HepG2 (cell line): ENCODE measurements at regions of chr11 and their contacts with region 1.

Region 1: DNA sequence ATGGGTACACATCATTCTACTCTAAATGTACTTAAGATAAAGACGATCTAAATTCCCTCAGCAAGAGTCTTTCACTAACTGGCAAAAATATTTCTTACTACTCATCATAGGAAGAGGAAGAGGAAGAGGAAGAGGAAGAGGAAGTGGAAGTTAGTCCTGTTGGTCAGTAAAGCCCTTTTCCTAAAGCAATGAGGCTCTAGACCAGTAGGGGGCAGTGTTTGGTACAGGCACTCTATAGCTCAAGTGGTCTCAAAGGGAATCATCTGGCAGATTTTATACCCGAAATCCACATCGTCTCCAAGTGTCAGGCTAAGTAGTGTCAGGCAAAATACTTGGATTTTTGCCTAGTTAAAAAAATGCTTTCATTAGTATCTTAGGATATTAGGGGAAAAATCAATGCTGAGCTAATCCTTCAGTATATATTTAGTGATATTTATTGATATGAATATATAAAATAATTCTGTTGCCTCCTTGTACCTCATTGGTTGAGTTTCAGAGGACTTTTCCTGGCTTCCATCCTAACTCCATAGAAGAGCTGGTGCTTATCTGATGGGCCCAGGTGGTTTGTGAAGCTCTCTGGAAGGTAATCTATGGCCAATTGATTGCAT is 7.7 kb downstream of the BLID start:
- DNase-seq: peak; percentile 29
- ATAC-seq: peak; percentile 37; the same call in 1 of the 3 replicates
- H3K4me3 ChIP-seq: no peak overlapping the region
- H3K27ac ChIP-seq: no peak overlapping the region
- H3K4me1 ChIP-seq: no peaks in the 10 kb centered on the region
- H3K27me3 ChIP-seq: no peaks in the 10 kb centered on the region
- CTCF ChIP-seq: peak; percentile 47
- EP300 ChIP-seq: no peak
- POLR2A ChIP-seq: no peak
- RAD21 ChIP-seq: no peak

Region 2: DNA sequence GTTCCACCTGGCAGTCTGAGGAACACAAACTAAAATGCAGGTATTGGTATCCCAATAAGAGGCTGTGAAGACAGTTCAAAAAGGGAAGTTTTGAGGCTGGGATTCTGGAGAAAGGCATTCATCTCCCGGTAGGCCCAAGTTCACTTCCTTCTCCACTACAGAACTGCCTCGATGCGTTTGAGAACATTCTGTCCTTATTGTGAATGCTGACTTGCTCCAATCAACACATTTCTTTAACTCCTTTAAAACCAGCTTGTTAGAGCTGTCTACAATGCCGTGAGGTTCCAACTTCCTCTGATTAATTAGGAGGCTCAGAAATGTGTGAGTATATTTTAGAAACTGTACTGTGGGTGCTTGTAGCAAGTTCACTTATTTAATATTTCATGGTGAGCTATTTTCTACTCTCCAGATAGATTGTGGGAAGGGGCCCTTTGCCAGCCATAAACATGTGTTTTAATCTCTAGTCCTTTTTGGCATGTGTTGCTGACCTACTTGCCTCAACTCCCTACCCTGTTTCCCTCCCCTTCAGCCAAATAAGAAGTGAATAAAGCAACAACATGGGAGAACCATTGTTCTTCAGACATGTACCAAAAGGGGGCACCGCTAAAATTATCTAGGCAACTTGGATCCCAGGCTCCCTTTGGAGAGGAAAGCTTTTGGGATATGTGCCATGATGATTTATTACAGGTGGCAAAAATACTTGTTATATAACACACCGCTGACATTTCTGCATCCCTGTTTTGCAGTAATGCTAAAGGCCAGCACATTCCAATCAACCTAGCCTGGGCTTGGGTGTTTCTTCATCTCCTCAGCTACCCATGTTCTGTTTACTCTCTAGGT is 237.9 kb before region 1 on chr11:
- CTCF ChIA-PET with region 1: no interaction called
- POLR2A ChIA-PET with region 1: no interaction called
- in situ Hi-C with region 1: no loop called
- intact Hi-C with region 1: loop called (anchors 10 kb)
- DNase-seq: peak; percentile 4
- ATAC-seq: no peak
- H3K4me3 ChIP-seq: no peak overlapping the region
- H3K27ac ChIP-seq: no peak overlapping the region
- H3K4me1 ChIP-seq: peaks cover 14% of the 10 kb centered on the region
- H3K27me3 ChIP-seq: no peaks in the 10 kb centered on the region
- CTCF ChIP-seq: peak; percentile 37
- EP300 ChIP-seq: no peak
- POLR2A ChIP-seq: no peak
- RAD21 ChIP-seq: no peak

Region 3: DNA sequence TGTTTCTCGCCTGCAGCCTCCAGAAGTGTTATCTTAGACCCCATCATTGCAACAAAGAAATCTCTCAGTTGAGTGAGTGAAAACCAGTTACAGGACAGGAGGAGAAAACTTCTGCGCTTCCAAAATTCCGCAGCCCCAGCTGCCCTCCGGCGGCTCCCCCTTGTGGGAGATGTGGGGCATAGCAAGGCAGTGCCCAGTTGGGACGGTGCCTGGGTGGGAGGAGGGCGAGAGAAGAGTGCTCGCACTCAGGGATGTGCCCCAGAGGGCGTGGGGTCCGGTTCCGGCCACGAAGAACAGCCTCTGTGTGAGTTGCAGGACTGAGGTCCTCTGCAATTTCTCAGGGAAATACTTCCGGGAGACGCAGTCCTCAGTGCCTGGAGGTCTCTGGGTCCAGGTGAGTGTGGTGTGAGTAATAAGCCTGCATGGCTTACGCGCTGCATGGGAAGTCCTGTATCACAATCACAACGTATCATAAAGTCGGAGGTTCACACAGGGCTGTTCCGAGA is 94.7 kb after region 1 on chr11:
- CTCF ChIA-PET with region 1: no interaction called
- POLR2A ChIA-PET with region 1: no interaction called
- in situ Hi-C with region 1: no loop called
- intact Hi-C with region 1: loop called (anchors 2 kb)
- DNase-seq: peak; percentile 17
- ATAC-seq: peak; percentile 98
- H3K4me3 ChIP-seq: no peak overlapping the region
- H3K27ac ChIP-seq: no peak overlapping the region
- H3K4me1 ChIP-seq: peaks cover 19% of the 10 kb centered on the region
- H3K27me3 ChIP-seq: peaks cover 0 to 8% of the 10 kb centered on the region in 2 experiments; a peak in 1 of 5 replicates
- CTCF ChIP-seq: peak; percentile 87
- EP300 ChIP-seq: no peak
- POLR2A ChIP-seq: no peak
- RAD21 ChIP-seq: peak; percentile 82